Sigmoid colon (tissue), 7 donors: ENCODE measurements at regions of chr14 and their contacts with region 1.

Region 1: GRCh38 chr14:104708606-104709268 is 15.3 kb upstream of the ADSS1 start:
- DNase-seq: no peak
- H3K4me3 ChIP-seq: no peak overlapping the region
- H3K27ac ChIP-seq: no peak overlapping the region
- H3K4me1 ChIP-seq: peaks cover 0 to 22% (median 12%) of the 10 kb centered on the region in 4 donors
- H3K27me3 ChIP-seq: no peaks in the 10 kb centered on the region
- CTCF ChIP-seq: peak; percentile 94 to 99 (median 98)
- EP300 ChIP-seq: no peak
- POLR2A ChIP-seq: no peak

Region 2: DNA sequence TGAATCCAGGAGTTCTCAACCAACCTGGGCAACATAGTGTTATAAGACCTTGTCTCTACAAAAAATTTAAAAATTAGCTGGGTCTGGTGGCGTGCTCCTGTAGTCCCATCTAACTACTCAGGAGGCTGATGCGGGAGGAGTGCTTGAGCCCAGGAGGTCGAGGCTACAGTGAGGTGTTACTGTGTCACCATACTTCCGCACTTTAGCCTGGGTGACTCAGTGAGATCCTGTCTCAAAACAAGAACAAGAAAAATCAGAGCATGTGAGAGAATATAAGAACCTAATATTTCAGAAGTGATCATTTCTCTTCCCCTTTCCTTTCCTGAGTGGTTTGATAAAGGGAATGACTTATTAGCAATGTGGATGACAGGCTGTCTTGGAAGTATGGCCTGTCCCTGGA is 1922.0 kb before region 1 on chr14:
- intact Hi-C with region 1: loop called (anchors 10 kb)
- DNase-seq: no peak
- H3K4me3 ChIP-seq: no peak overlapping the region
- H3K27ac ChIP-seq: no peak overlapping the region
- H3K4me1 ChIP-seq: no peaks in the 10 kb centered on the region
- H3K27me3 ChIP-seq: no peaks in the 10 kb centered on the region
- CTCF ChIP-seq: no peak
- EP300 ChIP-seq: no peak
- POLR2A ChIP-seq: no peak

Region 3: GRCh38 chr14:104650057-104650981 is 58.4 kb before region 1 on chr14:
- intact Hi-C with region 1: loop called (anchors 1 kb)
- DNase-seq: peak; percentile 81
- H3K4me3 ChIP-seq: peak overlapping the region; percentile 13 to 46 (median 43)
- H3K27ac ChIP-seq: no peak overlapping the region
- H3K4me1 ChIP-seq: peaks cover 0 to 10% (median 9%) of the 10 kb centered on the region in 4 donors
- H3K27me3 ChIP-seq: no peaks in the 10 kb centered on the region
- CTCF ChIP-seq: peak; percentile 94 to 99 (median 98)
- EP300 ChIP-seq: no peak
- POLR2A ChIP-seq: no peak

Region 4: DNA sequence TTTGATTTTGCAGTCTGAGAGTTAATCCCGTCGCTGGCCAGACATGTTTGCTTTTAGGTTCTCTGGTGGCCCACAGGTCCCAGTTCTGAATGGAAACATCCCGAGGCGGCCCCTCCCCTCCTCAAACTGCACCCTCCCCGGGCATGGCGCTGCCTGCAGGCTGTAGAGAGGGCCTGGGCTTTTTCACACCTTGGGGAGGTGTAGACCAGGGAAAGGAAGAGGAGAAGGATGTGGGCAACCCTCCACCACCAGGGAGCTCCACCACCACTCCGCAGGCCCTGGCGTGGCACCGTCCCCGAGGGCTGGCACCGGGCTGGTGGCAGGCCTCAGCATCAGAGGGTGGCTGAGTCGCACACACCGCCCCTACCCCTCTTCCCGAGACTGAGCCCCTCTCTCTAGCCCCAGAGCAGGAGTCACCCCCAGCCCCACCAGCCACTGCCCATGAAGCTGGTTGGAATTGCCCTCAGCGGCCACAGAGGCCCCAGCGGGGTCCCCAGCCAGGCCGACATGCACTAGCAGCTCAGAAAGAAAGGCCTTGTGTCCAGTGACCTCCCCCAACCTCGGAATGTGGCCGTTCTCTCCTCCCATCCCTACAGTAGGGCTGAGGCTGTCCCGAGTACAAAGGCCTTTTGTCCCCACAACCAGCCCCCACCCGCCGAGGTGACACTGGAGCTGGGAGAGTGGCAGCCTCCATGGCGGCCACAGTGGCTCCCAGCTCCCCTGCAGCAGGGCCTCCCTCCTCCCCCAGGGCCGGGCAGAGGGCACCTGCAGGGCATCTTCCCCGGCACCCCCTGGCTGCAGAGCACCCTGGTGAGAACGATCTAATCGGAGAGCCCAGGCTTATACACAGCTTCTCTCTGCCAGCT is 42.8 kb before region 1 on chr14:
- intact Hi-C with region 1: loop called (anchors 5 kb)
- DNase-seq: peak; percentile 61
- H3K4me3 ChIP-seq: no peak overlapping the region
- H3K27ac ChIP-seq: peak overlapping the region; percentile 1 to 53 (median 44)
- H3K4me1 ChIP-seq: no peaks in the 10 kb centered on the region
- H3K27me3 ChIP-seq: peaks cover 0 to 5% (median 0%) of the 10 kb centered on the region in 3 donors
- CTCF ChIP-seq: peak in 2 of 4 experiments; percentile 13 to 46
- EP300 ChIP-seq: no peak
- POLR2A ChIP-seq: no peak

Region 5: GRCh38 chr14:104757238-104757585 is 48.5 kb after region 1 on chr14:
- intact Hi-C with region 1: no loop called
- DNase-seq: no peak
- H3K4me3 ChIP-seq: no peak overlapping the region
- H3K27ac ChIP-seq: no peak overlapping the region
- H3K4me1 ChIP-seq: peaks cover 2 to 23% (median 20%) of the 10 kb centered on the region in 4 donors
- H3K27me3 ChIP-seq: no peaks in the 10 kb centered on the region
- CTCF ChIP-seq: no peak
- EP300 ChIP-seq: no peak
- POLR2A ChIP-seq: no peak

Region 6: GRCh38 chr14:104768437-104769323 is 59.9 kb after region 1 on chr14:
- intact Hi-C with region 1: no loop called
- DNase-seq: peak; percentile 94
- H3K4me3 ChIP-seq: no peak overlapping the region
- H3K27ac ChIP-seq: peak overlapping the region; percentile 12 to 55 (median 48)
- H3K4me1 ChIP-seq: peaks cover 0 to 10% (median 9%) of the 10 kb centered on the region in 4 donors
- H3K27me3 ChIP-seq: no peaks in the 10 kb centered on the region
- CTCF ChIP-seq: peak; percentile 75 to 91 (median 80)
- EP300 ChIP-seq: no peak
- POLR2A ChIP-seq: no peak